Ascending aorta (tissue), 2 donors: ENCODE measurements at regions of chr17 and their contacts with region 1.

Region 1: DNA sequence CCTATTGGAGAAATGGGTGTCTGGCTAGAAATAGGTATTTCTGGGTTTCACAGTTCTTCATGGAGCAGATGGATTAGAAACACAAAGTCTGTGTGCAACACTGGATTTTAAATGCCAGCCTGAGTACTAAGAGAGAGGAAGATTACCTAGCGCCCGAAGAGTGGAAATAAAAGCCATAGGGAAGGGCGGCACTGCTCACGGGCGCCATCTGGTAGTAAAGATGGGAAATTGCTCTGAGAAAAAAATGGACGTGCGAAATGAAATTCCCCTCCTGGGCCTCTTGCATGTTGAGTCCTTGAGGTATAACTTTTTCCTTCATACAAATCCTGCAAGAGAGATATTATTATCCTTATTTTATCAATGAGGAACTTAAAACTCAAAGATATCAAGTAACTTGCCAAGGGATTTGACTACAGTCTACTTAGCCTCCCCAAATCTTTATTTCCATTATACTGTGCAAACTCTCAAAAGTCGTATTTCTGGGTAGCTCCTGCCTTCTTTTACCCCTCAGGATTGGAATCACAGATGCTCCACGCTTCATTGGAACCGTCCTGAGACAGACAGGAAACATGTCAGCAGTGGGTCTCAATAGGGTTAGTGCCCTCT is 72.8 kb downstream of the MMD start:
- DNase-seq: peak in 1 of 2 donors; percentile 66
- H3K4me3 ChIP-seq: no peak overlapping the region
- H3K27ac ChIP-seq: no peak overlapping the region
- H3K4me1 ChIP-seq: no peaks in the 10 kb centered on the region
- H3K27me3 ChIP-seq: no peaks in the 10 kb centered on the region
- CTCF ChIP-seq: peak; percentile 69 to 92 (median 82)

Region 2: DNA sequence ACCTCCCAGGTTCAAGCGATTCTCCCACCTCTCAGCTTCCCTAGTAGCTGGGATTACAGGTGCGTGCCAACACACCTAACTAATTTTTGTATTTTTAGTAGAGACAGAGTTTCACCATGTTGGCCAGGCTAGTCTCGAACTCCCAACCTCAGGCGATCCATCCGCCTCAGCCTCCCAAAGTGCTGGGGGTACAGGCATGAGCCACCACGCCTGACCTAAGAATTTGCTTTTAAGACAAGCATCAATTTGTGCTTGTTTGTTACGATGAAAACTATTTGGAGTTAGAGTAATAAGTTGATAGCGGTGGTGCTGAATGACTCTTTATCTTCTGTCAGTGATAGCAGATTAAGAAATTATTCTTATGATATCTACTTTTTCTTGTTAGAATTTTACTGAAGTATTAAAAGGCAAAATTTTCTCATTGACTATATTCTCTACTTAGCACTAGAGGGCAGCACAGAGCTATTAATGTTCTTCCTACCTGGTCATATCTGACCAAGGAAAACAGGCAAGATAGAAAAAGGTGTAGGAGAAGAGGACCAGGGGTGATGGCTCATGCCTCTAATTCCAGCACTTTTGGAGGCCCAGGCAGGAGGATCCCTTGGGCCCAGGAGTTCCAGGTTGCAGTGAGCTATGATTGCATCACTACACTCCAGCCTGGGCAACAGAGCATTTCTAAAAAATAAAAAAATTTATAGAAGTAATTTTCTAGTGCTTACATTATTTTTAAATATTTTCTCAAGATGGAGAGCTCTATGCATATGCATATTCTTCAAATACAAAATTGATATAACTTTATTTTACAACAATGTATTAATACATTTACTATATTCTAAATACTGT is 355.8 kb before region 1 on chr17:
- intact Hi-C with region 1: loop called (anchors 1 kb)
- DNase-seq: no peak
- H3K4me3 ChIP-seq: no peak overlapping the region
- H3K27ac ChIP-seq: no peak overlapping the region
- H3K4me1 ChIP-seq: no peaks in the 10 kb centered on the region
- H3K27me3 ChIP-seq: no peaks in the 10 kb centered on the region
- CTCF ChIP-seq: peak; percentile 46 to 65 (median 59)

Region 3: DNA sequence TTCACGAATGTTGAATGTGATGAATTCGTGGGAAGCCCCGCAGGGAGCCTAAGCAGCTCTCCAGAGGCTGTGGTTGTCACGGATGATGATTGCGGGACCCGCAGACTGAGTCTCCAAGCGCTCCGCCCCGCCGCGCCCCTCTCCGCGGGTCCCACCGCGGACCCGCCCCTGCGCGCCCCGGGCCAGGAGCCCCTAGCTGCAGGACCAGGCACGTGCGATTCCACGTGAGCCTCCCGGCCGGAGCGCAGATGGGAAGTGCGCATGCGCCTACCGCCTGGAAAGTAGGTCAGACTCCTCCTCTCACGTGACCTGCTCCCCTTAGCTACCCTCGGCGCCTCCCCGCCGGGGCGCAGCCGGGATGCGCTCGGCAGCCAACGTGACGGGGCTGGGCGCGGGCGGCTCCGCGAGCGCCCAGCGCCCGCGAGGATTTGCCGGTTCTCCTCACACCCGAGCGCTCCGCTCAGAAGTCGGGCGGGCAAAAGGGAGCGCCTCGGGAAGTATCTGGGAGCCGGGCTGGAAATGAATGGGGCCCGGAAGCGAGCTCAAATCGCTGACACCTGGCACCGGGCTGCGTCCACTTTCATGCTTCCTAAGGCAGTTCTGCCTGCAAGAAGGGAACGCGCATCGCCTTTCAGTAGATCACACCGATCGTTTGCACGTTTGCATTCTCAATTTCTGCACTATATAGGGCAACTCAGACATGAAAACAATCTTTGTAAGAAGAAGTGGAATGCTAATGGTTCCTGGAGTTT is 110.5 kb before region 1 on chr17:
- intact Hi-C with region 1: loop called (anchors 2 kb)
- DNase-seq: peak; percentile 66 to 95
- H3K4me3 ChIP-seq: peak overlapping the region; percentile 55 to 65
- H3K27ac ChIP-seq: peak overlapping the region; percentile 33 to 47
- H3K4me1 ChIP-seq: peaks cover 5 to 10% of the 10 kb centered on the region in 2 donors
- H3K27me3 ChIP-seq: no peaks in the 10 kb centered on the region
- CTCF ChIP-seq: no peak

Region 4: GRCh38 chr17:55295411-55296170 is 53.3 kb before region 1 on chr17:
- intact Hi-C with region 1: loop called (anchors 5 kb)
- DNase-seq: peak in 1 of 2 donors; percentile 82
- H3K4me3 ChIP-seq: no peak overlapping the region
- H3K27ac ChIP-seq: peak overlapping the region; percentile 58 to 64
- H3K4me1 ChIP-seq: peaks cover 0 to 6% of the 10 kb centered on the region in 2 donors
- H3K27me3 ChIP-seq: no peaks in the 10 kb centered on the region
- CTCF ChIP-seq: peak; percentile 78 to 87 (median 85)

Region 5: GRCh38 chr17:55398689-55399088 is 49.8 kb after region 1 on chr17:
- intact Hi-C with region 1: no loop called
- DNase-seq: no peak
- H3K4me3 ChIP-seq: no peak overlapping the region
- H3K27ac ChIP-seq: no peak overlapping the region
- H3K4me1 ChIP-seq: no peaks in the 10 kb centered on the region
- H3K27me3 ChIP-seq: no peaks in the 10 kb centered on the region
- CTCF ChIP-seq: no peak

Region 6: DNA sequence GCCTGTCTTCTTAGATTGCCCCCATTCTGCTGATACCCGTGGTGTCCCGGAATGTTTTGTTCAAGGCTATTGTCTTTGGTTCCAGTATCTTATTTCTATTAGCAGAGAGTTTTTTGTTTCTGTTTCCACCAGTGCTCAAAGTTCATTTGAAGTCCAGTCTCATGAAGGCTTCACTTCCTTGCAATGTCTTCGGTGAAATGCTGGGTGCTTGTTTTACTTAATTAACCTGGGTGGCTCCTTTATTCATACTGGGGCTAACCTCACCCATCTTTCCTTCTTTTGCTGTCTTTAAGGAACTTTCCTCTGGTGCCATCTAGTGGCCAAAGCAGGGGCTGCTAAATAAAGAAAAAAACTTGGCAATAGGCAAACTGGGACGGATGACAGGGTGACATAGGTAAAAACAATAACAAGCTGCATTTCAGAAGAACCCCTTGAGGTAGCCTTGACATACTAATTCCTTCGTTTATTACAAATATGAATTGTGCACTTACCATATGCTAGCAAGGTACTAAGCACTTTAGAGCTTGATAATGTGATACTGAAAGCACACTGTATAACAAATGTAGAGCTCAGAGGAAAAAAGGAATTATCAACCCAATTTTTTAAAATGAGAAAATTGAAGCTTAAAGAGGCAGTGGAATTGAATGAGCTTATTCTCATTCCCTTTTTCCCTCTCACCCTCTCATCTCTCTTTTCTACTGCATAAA is 165.2 kb after region 1 on chr17:
- intact Hi-C with region 1: loop called (anchors 10 kb)
- DNase-seq: peak; percentile 12 to 82
- H3K4me3 ChIP-seq: no peak overlapping the region
- H3K27ac ChIP-seq: no peak overlapping the region
- H3K4me1 ChIP-seq: no peaks in the 10 kb centered on the region
- H3K27me3 ChIP-seq: no peaks in the 10 kb centered on the region
- CTCF ChIP-seq: peak; percentile 64 to 87 (median 87)